ENCODE measurements at regions of chr4 and their contacts with region 1.

Region 1: DNA sequence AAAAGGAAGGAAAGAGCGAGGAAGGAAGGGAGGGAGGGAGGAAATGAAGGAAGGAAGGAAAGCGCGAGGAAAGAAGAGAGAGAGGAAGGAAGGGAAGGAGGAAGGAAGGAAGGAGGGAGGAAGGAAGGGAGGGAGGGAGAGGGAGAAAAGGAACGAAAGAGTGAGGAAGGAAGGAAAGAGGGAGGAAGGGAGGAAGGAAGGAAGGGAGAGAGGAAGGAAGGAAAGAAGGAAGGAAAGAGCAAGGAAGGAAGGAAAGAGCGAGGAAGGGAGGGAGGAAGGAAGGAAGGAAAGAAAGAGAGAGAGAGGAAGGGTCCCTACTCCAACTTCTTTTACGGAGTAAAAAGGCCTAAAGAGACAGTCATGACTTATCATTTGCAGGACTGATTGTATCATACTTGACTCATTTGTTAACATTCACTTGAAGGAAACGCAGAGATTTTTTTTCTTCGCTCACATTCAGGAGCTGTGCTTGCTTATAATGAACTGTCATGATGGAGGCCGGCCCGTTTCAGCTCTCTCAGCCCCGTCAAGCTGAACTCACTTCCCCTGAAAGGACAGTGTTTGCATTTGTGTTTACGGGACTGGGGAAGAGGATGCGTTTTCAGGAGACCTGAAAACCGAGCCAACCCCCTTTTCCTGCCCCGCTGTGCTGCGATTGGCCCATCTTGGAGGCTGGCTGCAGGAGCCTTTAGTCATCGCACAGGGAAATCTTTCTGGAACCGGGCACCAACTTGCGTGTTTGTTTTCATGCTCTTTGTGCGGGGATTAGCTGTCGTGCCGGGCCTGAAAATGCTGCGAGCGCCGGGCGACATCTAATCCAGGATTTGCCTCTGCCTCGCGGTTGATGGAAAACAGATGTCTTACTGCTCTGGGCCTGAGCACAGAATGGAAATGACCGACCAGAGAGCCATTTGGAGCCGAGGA is 17.8 kb downstream of the TRIM2 start:
- DNase-seq: peak; percentile 82

Region 2: DNA sequence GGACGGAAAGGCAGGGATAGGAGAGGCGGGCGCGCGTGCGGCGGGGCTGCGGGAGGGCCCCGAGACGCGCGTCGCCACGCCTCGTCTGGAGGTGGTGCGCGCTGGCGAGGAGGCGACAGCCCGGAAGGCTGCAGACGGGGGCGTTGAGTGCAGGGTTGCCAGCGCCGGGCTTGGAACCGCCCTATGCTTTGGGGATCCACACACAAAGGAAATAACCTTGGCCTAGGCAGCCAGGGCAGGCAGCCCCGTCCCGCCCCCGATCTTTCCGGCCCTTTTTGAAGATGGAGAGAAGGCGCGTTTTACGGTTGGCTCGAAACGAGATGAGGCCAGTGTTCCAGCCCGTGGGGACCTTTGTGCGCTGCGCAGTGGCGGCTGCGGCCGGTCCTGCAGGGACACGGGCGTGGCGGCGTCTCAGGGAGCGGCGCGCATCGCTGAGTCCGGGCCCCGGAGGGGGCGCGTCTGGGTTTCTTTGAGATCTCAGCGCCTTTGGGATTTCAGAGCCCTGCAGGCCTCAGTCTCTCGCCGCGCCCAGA is 68.6 kb before region 1 on chr4:
- intact Hi-C with region 1: loop called (anchors 5 kb)
- DNase-seq: peak; percentile 79

Region 3: DNA sequence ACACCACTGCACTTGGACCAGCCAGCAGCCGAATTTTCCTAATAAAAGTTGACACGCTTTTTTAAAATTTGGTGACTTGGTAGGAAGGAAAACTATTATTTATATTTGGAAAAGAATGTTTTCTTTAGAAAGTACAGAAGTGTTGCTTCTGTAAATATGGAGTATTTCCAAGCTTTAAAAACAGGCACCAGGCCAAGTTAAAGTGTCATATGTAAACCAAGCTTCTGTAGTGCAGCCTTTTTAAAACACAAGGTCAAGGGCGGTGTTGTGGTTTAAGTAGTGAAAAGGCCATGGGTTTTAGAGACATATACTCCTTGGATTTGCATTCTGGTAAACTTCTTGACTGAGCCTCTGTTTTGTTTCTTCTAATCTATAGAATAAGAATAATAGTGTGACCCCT is 44.9 kb after region 1 on chr4:
- intact Hi-C with region 1: no loop called
- DNase-seq: no peak